Endothelial cell of umbilical vein (primary cell): ENCODE measurements at regions of chr17 and their contacts with region 1.

Region 1: GRCh38 chr17:79019632-79020584 is 4.1 kb upstream of the C1QTNF1 start:
- DNase-seq: peak; percentile 67
- H3K4me3 ChIP-seq: no peak overlapping the region
- H3K27ac ChIP-seq: no peak overlapping the region
- H3K4me1 ChIP-seq: peaks cover 7% of the 10 kb centered on the region
- H3K27me3 ChIP-seq: peaks cover 0 to 10% of the 10 kb centered on the region in 2 experiments
- CTCF ChIP-seq: peak; percentile 59 to 63
- POLR2A ChIP-seq: no peak

Region 2: DNA sequence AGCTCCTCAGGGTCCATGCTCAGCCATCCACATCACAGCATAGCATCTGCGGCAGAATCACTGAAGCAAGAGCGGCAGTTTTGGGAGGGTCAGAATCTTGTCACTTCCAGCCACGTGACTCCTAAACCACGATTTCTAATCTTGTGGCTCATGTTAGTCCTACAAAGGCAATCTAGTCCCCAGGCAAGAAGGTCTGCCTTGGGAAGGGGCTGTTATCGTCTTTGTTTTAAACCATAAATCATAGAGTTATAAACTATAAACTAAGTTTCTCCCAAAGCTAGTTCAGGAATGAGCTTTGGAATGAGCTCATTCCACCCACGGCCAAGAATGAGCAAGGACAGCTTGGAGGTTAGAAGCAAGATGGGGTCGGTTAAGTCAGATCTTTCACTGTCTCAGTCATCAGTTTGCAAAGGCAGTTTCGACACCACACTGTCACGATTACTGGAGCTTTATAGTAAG is 421.9 kb before region 1 on chr17:
- CTCF ChIA-PET with region 1: no interaction called
- POLR2A ChIA-PET with region 1: no interaction called
- dilution Hi-C with region 1: no loop called
- intact Hi-C with region 1: no loop called
- DNase-seq: no peak
- H3K4me3 ChIP-seq: no peak overlapping the region
- H3K27ac ChIP-seq: no peak overlapping the region
- H3K4me1 ChIP-seq: peaks cover 3% of the 10 kb centered on the region
- H3K27me3 ChIP-seq: no peaks in the 10 kb centered on the region
- CTCF ChIP-seq: no peak
- POLR2A ChIP-seq: no peak

Region 3: DNA sequence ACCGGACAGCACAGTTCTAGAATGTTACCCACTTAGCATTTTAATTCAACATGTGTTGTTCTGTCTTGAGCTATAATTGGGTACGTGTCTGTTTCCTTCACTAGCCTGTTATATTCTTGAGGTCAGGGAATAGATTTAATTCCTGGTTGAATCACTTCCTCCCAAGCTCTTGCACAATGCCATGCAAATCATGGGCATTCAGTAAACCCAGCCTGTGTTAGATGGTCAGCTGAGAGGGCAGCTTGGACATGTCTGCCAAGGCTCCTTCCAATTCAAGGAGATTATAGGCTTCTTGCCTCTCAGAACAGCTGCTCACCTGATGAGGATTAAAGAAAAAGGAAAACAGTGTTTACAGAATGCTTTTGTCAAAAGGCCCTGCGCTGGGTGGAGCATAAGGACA is 16.7 kb after region 1 on chr17:
- CTCF ChIA-PET with region 1: interaction called, 75 read pairs
- POLR2A ChIA-PET with region 1: interaction called, 5 read pairs
- dilution Hi-C with region 1: no loop called
- intact Hi-C with region 1: no loop called
- DNase-seq: peak; percentile 77
- H3K4me3 ChIP-seq: no peak overlapping the region
- H3K27ac ChIP-seq: no peak overlapping the region
- H3K4me1 ChIP-seq: peaks cover 10% of the 10 kb centered on the region
- H3K27me3 ChIP-seq: peaks cover 0 to 6% of the 10 kb centered on the region in 2 experiments
- CTCF ChIP-seq: no peak
- POLR2A ChIP-seq: no peak

Region 4: GRCh38 chr17:79053251-79053925 is 33.5 kb after region 1 on chr17:
- CTCF ChIA-PET with region 1: no interaction called
- POLR2A ChIA-PET with region 1: no interaction called
- dilution Hi-C with region 1: no loop called
- intact Hi-C with region 1: no loop called
- DNase-seq: no peak
- H3K4me3 ChIP-seq: no peak overlapping the region
- H3K27ac ChIP-seq: no peak overlapping the region
- H3K4me1 ChIP-seq: peaks cover 5% of the 10 kb centered on the region
- H3K27me3 ChIP-seq: peaks cover 0 to 4% of the 10 kb centered on the region in 2 experiments
- CTCF ChIP-seq: no peak
- POLR2A ChIP-seq: no peak

Region 5: DNA sequence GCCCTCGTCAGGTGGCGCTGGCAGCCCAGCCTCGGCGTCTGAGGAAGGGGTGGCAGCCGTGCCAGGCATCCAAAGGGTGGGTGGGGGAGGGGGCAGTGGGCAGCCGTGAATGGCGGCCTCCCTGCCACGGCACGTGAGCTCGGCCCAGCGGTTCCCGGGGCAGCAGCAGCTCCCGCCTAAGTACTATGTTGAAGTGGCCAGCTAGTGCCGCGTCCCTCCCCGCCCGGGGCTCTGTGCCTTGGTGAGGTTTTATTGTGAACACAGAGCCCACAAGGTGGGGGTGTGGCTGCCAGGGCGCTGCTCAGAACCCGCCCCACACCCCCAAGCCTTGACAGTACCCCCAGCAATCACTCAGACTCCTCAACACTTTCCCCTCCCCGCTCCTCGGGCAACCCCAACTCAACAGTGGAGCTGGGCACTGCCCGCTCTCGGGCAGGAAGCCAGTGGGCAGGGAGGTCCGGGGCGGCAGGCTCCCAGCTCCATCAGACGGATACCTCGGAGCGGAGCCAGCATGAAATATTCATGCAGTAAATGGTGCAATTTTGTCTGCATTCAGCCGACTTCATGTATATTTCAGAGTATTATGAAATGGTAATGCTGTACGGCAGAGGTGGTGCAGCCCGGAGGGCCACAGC is 135.2 kb after region 1 on chr17:
- CTCF ChIA-PET with region 1: no interaction called
- POLR2A ChIA-PET with region 1: no interaction called
- dilution Hi-C with region 1: no loop called
- intact Hi-C with region 1: no loop called
- DNase-seq: no peak
- H3K4me3 ChIP-seq: no peak overlapping the region
- H3K27ac ChIP-seq: no peak overlapping the region
- H3K4me1 ChIP-seq: no peaks in the 10 kb centered on the region
- H3K27me3 ChIP-seq: no peaks in the 10 kb centered on the region
- CTCF ChIP-seq: no peak
- POLR2A ChIP-seq: no peak